ENCODE measurements at regions of chr5 and their contacts with region 1.

Region 1: DNA sequence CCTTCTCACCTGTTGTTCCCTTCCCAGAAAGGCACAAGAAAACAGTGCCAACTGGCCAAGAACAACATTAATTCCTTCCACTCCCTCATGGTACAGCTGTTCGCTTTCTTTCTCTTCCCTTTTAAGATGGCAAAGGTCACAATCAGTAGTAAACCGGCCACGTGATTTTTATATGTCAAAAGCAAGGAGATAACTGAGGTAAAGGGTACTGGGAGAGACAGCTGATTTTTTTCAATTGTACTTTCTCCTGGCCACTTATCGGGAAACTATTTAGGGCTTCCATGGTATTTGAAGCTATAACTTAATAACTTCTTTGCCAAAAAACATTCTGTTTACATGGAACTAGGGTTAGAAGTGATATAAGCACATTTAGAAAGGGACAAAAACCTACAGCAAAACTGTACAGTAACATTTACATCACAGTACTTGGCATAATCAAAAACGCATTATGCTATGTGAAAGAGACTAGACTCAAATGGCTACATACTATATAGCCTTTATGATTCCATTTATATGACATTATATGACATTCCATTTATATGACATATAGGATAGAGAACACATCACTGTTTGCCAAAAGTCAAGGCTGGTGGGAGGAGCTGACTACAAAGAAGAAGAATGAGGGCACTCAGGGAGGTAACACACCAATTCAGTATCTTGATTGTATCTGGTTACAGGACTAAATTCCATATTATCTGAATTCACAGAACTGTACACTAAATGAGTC is 24.8 kb downstream of the PLPP1 start:
- DNase-seq: no peak
- H3K4me3 ChIP-seq: no peak overlapping the region
- H3K27ac ChIP-seq: no peak overlapping the region
- H3K27me3 ChIP-seq: no peaks in the 10 kb centered on the region
- CTCF ChIP-seq: no peak

Region 2: DNA sequence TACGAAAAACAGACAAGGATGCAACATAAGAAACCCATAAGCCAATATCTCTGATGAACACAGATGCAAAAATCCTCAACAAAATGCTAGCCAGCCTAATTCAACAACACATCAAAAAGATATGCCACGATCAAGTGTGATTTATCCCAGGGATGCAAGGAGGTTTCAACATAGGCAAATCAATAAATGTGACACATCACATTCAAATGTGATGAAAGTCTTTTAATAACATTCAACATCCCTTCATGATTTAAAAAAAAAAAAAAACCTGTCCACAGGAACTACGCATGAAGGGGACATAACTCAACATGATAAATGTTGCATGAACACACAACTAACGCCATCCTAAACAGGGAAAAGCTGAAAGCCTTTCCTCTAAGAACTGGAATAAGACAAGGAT is 77.4 kb before region 1 on chr5:
- CTCF ChIA-PET with region 1: no interaction called
- POLR2A ChIA-PET with region 1: interaction called, 12 read pairs
- DNase-seq: no peak
- H3K4me3 ChIP-seq: no peak overlapping the region
- H3K27ac ChIP-seq: no peak overlapping the region
- H3K27me3 ChIP-seq: no peaks in the 10 kb centered on the region
- CTCF ChIP-seq: no peak